ENCODE measurements at regions of chr2 and their contacts with region 1.

Region 1: DNA sequence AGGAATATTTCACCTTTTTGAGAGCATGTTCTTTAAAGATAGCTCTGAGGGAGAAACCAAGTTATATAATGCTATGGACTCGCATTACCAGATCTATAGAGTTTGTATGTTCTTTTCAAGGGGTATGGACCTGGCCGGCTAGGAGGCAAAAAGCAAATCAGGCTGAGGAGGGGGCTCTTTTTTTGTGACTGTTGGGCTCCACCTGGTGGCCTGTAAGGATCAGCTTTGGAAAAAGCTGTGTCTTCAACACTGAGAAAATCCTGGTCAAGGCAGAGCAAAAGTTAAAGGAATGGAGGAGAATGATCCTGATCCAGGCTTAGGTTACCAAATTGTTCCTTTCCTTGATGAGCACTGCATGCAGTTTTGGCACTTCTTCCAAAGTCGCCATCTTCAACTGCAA is 180.5 kb downstream of the DIS3L2 start:
- DNase-seq: peak; percentile 17
- ATAC-seq: peak; percentile 85
- H3K4me3 ChIP-seq: no peak overlapping the region
- H3K27ac ChIP-seq: no peak overlapping the region
- H3K4me1 ChIP-seq: no peaks in the 10 kb centered on the region
- H3K27me3 ChIP-seq: no peaks in the 10 kb centered on the region
- CTCF ChIP-seq: peak; percentile 81

Region 2: DNA sequence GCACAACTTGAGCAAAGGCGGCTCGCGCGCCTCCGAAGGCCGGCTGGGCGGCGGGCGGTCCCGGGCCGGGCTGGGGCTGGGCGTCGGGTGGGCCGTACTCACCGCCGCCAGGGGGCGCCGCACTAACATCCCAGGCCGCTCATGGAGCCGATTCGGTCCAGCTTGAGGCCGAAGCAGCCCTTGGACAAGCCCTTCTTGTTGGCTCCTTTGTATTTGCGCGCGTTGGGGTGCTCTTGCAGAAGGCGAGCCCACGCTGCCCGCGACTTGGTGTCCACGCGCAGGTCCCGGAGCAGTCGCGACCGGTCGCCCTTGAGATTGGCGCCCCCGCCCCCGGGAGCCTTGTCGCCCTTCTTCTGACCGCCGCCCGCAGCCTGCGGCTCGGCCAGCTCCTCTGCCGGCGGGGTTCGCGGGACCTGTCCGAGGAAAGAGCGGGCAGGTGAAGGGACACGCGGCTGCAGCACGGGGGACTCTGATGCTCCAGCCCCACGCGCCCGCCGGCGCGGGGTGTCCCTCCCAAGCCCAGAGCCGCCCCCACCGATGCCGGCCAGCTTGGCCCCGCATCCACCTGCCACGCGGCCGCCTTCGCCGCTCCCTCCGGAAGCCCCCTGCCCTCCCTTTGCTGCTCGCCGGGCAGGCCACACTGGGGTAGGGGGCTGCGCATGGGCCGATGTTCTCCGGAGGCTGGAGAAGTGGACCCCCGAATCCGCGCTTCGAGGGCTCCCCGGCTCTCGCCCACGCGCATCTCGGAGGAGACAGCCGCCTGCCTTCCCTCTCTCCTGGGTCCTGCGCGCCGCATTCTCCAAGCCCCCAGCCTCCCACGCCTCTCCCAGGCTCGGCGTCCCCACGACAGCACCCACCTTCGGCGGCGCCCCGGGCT is 216.5 kb before region 1 on chr2:
- CTCF ChIA-PET with region 1: interaction called, 9 read pairs
- POLR2A ChIA-PET with region 1: no interaction called
- in situ Hi-C with region 1: no loop called
- intact Hi-C with region 1: loop called (anchors 5 kb)
- DNase-seq: no peak
- ATAC-seq: peak; percentile 89
- H3K4me3 ChIP-seq: peak overlapping the region; percentile 45 to 52
- H3K27ac ChIP-seq: no peak overlapping the region
- H3K4me1 ChIP-seq: peaks cover 4% of the 10 kb centered on the region; the same call in 1 of the 2 replicates
- H3K27me3 ChIP-seq: no peaks in the 10 kb centered on the region; the same call in 1 of the 2 replicates
- CTCF ChIP-seq: peak; percentile 95

Measured in Panc1 (cell line).